A549 (cell line): ENCODE measurements at regions of chr2 and their contacts with region 1.

Region 1: DNA sequence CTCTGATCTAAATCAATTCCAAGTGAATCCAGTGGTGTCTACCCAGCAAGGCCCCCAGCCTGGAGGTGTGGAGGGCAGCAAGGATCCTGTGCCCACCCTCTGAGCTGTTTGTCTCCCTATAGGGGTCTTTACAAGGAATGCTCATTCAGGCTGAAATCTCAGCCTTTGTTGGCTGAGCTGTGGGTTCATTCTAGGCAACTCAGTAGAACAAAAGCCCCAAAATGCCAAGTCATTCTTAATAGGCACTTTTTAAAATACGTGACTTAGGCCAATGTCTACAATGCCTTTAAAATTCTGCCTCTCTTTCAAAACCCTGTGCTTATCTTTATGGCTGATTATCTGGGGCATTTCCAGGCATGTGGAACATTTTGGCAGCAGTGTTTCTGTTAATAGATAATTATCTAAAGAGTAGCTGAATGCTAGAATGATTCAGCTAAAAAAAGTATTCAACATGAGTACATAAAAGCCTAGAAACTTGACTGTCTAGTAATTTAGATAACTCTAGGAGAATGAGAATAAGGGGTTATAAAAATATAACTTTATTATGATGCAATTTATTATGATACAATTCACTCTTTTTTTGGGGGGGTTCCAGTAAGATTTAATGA is 7.4 kb downstream of the UGT1A6 start:
- DNase-seq: peak; percentile 61 to 98
- ATAC-seq: peak; percentile 93 to 98
- H3K4me3 ChIP-seq: no peak overlapping the region
- H3K27ac ChIP-seq: peak overlapping the region; percentile 99 to 100
- H3K4me1 ChIP-seq: peaks cover 30% of the 10 kb centered on the region
- CTCF ChIP-seq: no peak
- EP300 ChIP-seq: peak; percentile 100
- POLR2A ChIP-seq: no peak
- RAD21 ChIP-seq: peak; percentile 39 to 71; a peak in 4 of 5 replicates

Region 2: GRCh38 chr2:233385489-233386044 is 314.6 kb before region 1 on chr2:
- CTCF ChIA-PET with region 1: no interaction called
- POLR2A ChIA-PET with region 1: no interaction called
- DNase-seq: no peak
- ATAC-seq: no peak
- H3K4me3 ChIP-seq: no peak overlapping the region
- H3K27ac ChIP-seq: peak overlapping the region; percentile 86 to 92
- H3K4me1 ChIP-seq: peaks cover 97% of the 10 kb centered on the region
- CTCF ChIP-seq: no peak
- EP300 ChIP-seq: no peak
- POLR2A ChIP-seq: no peak
- RAD21 ChIP-seq: no peak

Region 3: GRCh38 chr2:233556756-233557736 is 143.1 kb before region 1 on chr2:
- CTCF ChIA-PET with region 1: no interaction called
- POLR2A ChIA-PET with region 1: interaction called, 13 read pairs
- DNase-seq: peak; percentile 9 to 84
- ATAC-seq: peak; percentile 91
- H3K4me3 ChIP-seq: no peak overlapping the region
- H3K27ac ChIP-seq: peak overlapping the region; percentile 94
- H3K4me1 ChIP-seq: peaks cover 70% of the 10 kb centered on the region
- CTCF ChIP-seq: no peak
- EP300 ChIP-seq: peak in 1 of 2 experiments; percentile 45; a peak in 2 of 5 replicates
- POLR2A ChIP-seq: no peak
- RAD21 ChIP-seq: peak in 1 of 2 experiments; percentile 2; a peak in 2 of 5 replicates

Region 4: DNA sequence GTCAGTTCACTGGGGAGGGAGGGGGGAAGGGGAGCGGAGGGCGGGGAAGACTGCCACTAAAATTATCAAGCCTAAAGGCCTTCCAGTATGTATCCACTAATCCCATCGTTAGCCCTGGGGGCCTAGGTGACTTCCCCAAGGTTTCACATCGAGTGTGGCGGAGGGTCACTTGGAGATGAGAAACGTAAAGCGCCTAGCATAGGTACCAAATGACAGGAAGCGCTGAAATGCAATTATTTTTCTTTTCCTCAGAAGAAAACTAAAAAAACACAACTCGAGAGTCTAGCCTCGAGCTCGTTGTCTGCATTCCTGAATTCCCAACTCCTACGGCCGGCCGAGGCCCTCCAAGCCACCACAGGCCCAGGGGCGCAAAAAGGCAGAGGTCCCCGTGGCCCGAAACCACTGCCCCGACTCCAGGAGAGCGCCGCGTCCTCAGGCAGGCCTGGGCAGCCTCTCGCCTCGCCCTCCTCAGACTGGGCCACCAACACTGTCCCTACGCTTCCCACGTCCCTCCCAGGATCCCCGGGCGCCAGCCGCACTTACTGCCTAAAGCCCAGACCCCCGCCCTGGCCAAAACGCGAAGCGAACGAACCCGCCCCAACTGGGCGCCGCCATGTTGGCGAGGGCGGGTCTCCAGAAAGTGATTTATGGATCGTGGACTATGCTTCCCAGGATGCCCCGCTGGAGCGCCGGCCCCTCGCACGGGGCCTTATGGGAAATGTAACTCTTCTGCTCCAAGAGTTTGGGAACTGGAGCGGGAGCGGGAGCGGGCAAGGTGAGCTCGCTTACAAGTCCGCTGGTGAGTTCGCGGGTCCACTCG is 133.8 kb before region 1 on chr2 and contains the start of gene USP40:
- CTCF ChIA-PET with region 1: interaction called, 3 read pairs
- POLR2A ChIA-PET with region 1: interaction called, 13 read pairs
- DNase-seq: peak; percentile 77 to 95
- ATAC-seq: peak; percentile 99 to 100
- H3K4me3 ChIP-seq: peak within 1 kb of the TSS; percentile 63
- H3K27ac ChIP-seq: peak within 1 kb of the TSS; percentile 97 to 100
- H3K4me1 ChIP-seq: peaks cover 17% of the 10 kb centered on the region
- CTCF ChIP-seq: no peak
- EP300 ChIP-seq: no peak
- POLR2A ChIP-seq: peak; percentile 81
- RAD21 ChIP-seq: peak in 1 of 2 experiments; percentile 16; a peak in 1 of 5 replicates
- polyA plus RNA-seq, gene USP40: 57.0 and 65.3 TPM in 2 replicates

Region 5: DNA sequence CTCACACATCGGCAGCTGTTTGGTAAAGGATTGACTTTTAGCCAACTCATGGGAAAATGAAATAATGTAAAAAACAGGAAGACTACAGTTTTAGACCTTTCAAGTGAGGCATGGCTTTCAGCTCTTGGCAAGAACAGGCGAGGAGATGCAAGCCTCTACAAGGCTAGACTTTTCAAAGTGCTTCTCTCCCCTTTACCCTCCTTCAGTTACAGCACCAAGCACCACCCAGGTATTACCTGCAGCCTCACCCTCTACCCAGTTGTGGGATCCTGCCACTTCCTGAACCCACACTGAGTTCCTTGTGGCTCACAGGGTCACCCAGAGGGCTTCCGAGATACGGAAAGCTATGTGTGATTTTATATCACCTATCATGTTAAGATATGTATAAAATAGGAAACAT is 49.2 kb before region 1 on chr2:
- CTCF ChIA-PET with region 1: no interaction called
- POLR2A ChIA-PET with region 1: no interaction called
- DNase-seq: no peak
- ATAC-seq: no peak
- H3K4me3 ChIP-seq: no peak overlapping the region
- H3K27ac ChIP-seq: peak overlapping the region in 1 of 2 experiments; percentile 59; a peak in 2 of 6 replicates
- H3K4me1 ChIP-seq: no peaks in the 10 kb centered on the region
- CTCF ChIP-seq: no peak
- EP300 ChIP-seq: no peak
- POLR2A ChIP-seq: no peak
- RAD21 ChIP-seq: no peak

Region 6: DNA sequence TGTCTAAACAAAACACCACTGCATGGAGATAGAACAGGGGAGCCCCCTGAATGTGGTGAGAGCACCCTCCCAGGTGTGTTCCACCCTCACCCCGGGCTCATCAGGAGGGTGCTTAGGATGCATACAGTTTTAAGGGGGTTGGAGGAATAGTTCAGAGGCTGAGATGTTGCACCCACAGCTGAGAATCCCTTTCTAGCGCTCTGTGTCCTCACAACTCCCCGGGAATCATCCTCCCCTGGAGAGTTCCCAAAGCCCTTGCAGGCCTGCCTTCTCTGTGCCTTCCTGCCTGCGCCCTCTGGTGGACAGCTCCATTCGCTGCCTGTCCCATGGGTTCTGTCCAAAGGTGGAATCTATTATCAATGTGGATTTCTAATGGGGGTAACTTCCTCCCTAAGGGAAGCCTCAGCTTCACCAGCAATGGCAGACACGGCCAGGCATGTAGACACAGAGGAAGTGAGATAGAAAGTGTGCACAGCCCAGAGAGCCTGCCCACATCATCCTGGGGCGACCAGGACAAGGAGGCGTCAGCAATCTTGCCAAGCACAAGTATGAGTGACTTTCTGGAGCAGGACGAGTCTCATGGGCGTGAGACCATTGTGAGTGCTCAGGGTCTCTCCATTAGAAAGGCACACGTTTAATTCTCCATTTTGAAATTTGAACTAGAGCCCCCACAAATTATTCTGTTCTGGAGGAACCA is 11.3 kb after region 1 on chr2:
- CTCF ChIA-PET with region 1: interaction called, 11 read pairs
- POLR2A ChIA-PET with region 1: no interaction called
- DNase-seq: peak; percentile 54 to 90
- ATAC-seq: peak; percentile 83 to 89
- H3K4me3 ChIP-seq: no peak overlapping the region
- H3K27ac ChIP-seq: peak overlapping the region; percentile 98 to 100
- H3K4me1 ChIP-seq: peaks cover 52% of the 10 kb centered on the region
- CTCF ChIP-seq: peak; percentile 84
- EP300 ChIP-seq: no peak
- POLR2A ChIP-seq: no peak
- RAD21 ChIP-seq: peak; percentile 92 to 95